ENCODE measurements at regions of chr1 and their contacts with region 1.

Region 1: GRCh38 chr1:16243936-16244649 is 7.1 kb upstream of the CPLANE2 start:
- DNase-seq: peak; percentile 65 to 73 (median 70)
- H3K4me3 ChIP-seq: no peak overlapping the region
- H3K4me3 Mint-ChIP-seq: no peak overlapping the region
- H3K27ac ChIP-seq: no peak overlapping the region
- H3K27ac Mint-ChIP-seq: peak overlapping the region in 4 of 7 donors; percentile 38 to 59 (median 46)
- H3K4me1 ChIP-seq: peaks cover 11% of the 10 kb centered on the region
- H3K4me1 Mint-ChIP-seq: peaks cover 3 to 6% (median 5%) of the 10 kb centered on the region in 4 donors
- H3K27me3 ChIP-seq: no peaks in the 10 kb centered on the region
- H3K27me3 Mint-ChIP-seq: no peaks in the 10 kb centered on the region

Region 2: GRCh38 chr1:15985611-15986297 is 258.3 kb before region 1 on chr1:
- CTCF ChIA-PET with region 1: no interaction called
- POLR2A ChIA-PET with region 1: no interaction called
- intact Hi-C with region 1: no loop called
- DNase-seq: no peak
- H3K4me3 ChIP-seq: no peak overlapping the region
- H3K4me3 Mint-ChIP-seq: no peak overlapping the region
- H3K27ac ChIP-seq: no peak overlapping the region
- H3K27ac Mint-ChIP-seq: no peak overlapping the region
- H3K4me1 ChIP-seq: no peaks in the 10 kb centered on the region
- H3K4me1 Mint-ChIP-seq: no peaks in the 10 kb centered on the region
- H3K27me3 ChIP-seq: no peaks in the 10 kb centered on the region
- H3K27me3 Mint-ChIP-seq: no peaks in the 10 kb centered on the region

Region 3: GRCh38 chr1:16078925-16079656 is 165.0 kb before region 1 on chr1:
- CTCF ChIA-PET with region 1: interaction called, 63 read pairs
- POLR2A ChIA-PET with region 1: interaction called, 8 read pairs
- intact Hi-C with region 1: loop called (anchors 1 kb)
- DNase-seq: peak; percentile 73 to 76 (median 75)
- H3K4me3 ChIP-seq: peak overlapping the region in 1 of 2 donors; percentile 7
- H3K4me3 Mint-ChIP-seq: peak overlapping the region; percentile 76 to 92 (median 84)
- H3K27ac ChIP-seq: no peak overlapping the region
- H3K27ac Mint-ChIP-seq: peak overlapping the region in 6 of 7 donors; percentile 31 to 91 (median 58)
- H3K4me1 ChIP-seq: peaks cover 14% of the 10 kb centered on the region
- H3K4me1 Mint-ChIP-seq: peaks cover 8 to 18% (median 12%) of the 10 kb centered on the region in 4 donors
- H3K27me3 ChIP-seq: peaks cover 3% of the 10 kb centered on the region
- H3K27me3 Mint-ChIP-seq: peaks cover 1 to 4% of the 10 kb centered on the region in 2 donors

Region 4: DNA sequence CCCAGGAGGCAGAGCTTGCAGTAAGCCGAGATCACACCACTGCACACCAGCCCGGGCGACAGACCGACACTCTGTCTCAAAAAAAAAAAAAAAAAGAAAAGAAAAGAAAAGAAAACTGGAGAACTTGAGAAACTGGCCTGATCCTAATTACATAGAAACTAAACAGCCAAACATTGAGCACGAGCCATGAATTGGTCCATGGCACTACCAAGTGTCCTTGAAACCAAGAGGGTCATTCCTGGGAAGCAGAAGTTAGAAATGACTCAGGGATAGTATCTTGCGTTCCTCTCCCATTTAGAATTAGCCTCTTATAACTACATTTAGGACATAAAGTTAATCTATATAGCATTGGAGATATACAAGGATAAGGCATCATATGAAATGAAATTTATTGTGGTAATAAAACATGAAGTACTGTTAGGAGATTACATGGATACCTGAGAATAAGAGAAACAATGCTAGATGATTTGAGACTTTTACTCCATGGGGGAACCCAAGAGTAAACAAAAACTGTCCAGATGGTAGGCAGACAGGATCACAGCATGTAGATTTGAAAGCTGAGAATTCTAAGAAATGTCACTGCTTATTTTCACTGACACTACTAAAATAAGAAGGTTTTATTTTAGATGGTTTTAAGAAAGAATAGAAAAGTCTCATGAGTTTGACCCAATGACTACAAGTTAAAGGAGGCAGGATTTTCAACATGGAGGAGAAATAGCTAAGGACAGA is 32.4 kb after region 1 on chr1:
- CTCF ChIA-PET with region 1: no interaction called
- POLR2A ChIA-PET with region 1: no interaction called
- intact Hi-C with region 1: no loop called
- DNase-seq: no peak
- H3K4me3 ChIP-seq: no peak overlapping the region
- H3K4me3 Mint-ChIP-seq: no peak overlapping the region
- H3K27ac ChIP-seq: no peak overlapping the region
- H3K27ac Mint-ChIP-seq: no peak overlapping the region
- H3K4me1 ChIP-seq: no peaks in the 10 kb centered on the region
- H3K4me1 Mint-ChIP-seq: peaks cover 7 to 18% (median 9%) of the 10 kb centered on the region in 4 donors
- H3K27me3 ChIP-seq: no peaks in the 10 kb centered on the region
- H3K27me3 Mint-ChIP-seq: no peaks in the 10 kb centered on the region

Region 5: DNA sequence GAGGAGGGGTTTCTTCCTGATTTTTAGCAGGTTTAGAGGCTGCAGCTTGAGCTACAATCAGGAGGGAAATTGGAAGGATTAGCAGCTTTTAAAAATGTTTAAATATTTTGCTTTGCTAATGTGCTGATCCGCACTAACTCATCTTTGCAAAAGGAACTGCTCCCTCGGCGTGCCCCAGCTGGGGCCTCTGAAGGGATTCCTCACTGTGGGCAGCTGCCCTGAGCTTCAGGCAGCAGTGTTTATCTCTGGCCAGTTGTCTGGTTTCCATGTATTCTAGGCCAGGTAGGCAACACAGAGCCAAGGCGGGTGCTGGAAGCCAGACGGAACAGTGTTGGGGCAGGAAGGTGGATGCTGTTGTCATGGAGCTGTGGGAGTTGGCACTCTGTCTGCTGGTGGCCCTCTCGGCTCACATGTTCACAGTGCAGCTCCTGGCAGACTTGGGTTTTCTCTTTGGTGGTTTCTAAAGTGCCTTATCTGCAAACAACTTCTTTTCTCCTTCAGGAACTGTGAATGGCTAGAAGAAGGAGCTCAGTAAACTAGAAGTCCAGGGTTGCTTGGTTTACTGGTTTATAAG is 215.3 kb after region 1 on chr1:
- CTCF ChIA-PET with region 1: no interaction called
- POLR2A ChIA-PET with region 1: no interaction called
- intact Hi-C with region 1: no loop called
- DNase-seq: no peak
- H3K4me3 ChIP-seq: no peak overlapping the region
- H3K4me3 Mint-ChIP-seq: no peak overlapping the region
- H3K27ac ChIP-seq: no peak overlapping the region
- H3K27ac Mint-ChIP-seq: no peak overlapping the region
- H3K4me1 ChIP-seq: no peaks in the 10 kb centered on the region
- H3K4me1 Mint-ChIP-seq: peaks cover 0 to 7% (median 5%) of the 10 kb centered on the region in 4 donors
- H3K27me3 ChIP-seq: no peaks in the 10 kb centered on the region
- H3K27me3 Mint-ChIP-seq: no peaks in the 10 kb centered on the region

Measured in CD4-positive, alpha-beta memory T cell (primary cell).